ENCODE measurements at regions of chr16 and their contacts with region 1.

Region 1: GRCh38 chr16:11949527-11949926 is 7.7 kb upstream of the NPIPB2 start:
- DNase-seq: no peak
- ATAC-seq: peak; percentile 44 to 55

Region 2: DNA sequence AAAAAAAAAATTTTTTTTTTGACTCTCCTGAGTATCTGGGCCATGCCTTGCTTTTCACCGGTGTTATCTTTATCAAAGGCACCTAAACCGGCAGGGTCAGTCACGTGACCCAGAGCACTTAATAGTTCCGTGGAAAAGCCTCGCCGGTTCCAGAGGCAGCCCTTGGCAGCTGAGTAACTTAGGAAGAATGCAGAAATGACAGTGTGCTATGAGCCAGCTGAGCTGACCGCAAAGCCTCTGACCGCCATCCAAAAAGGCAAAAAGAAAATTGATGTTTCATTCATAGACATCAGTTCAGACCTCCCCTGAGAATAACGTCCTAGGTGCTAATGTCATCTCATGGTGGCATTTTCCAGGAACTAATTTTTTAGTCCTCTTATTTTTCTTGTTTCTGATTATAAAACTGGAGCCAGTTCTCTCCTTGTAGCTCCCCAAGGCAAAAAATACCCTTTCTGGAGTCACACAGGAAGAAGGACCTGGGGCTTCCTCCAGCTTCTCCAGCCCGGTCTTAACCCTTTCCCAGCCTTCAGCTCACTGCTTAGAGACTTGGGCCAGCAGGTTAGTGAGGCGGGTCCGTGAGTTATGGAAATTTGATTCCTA is 816.1 kb before region 1 on chr16:
- intact Hi-C with region 1: no loop called
- DNase-seq: peak; percentile 85
- ATAC-seq: peak; percentile 66 to 81

Region 3: GRCh38 chr16:12067714-12068401 is 118.3 kb after region 1 on chr16:
- intact Hi-C with region 1: loop called in 1 of 2 experiments (anchors 1 kb)
- DNase-seq: no peak
- ATAC-seq: peak; percentile 71 to 80